Activated CD4-positive, alpha-beta memory T cell treated with anti-CD3 and anti-CD28 coated beads for 36 hours (primary cell): ENCODE measurements at regions of chr6 and their contacts with region 1.

Region 1: DNA sequence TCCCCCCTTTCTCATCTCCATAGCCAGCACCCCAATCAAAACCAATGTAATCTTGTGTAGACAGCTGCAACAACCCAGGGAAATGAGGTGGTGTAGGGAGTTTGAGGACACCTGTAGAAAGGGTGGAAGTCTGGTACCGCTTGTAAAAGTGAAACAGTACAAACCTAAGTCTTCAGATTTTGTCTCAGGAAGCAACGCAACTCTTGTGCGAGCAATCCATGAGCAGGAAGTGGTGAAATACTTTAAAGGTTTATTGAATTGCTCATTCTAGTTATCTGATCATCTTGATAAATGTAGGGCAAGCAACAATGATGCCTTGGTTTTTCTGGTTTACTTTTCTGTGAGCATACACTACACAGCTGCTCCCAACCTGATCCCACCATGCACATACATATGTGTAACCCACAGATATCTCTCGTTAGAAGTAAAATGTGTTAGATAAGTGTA is 71.1 kb upstream of the THEMIS start:
- DNase-seq: peak; percentile 59
- H3K4me3 Mint-ChIP-seq: peak overlapping the region; percentile 73
- H3K27ac Mint-ChIP-seq: peak overlapping the region; percentile 88
- H3K4me1 Mint-ChIP-seq: peaks cover 48% of the 10 kb centered on the region
- H3K27me3 Mint-ChIP-seq: no peaks in the 10 kb centered on the region

Region 2: DNA sequence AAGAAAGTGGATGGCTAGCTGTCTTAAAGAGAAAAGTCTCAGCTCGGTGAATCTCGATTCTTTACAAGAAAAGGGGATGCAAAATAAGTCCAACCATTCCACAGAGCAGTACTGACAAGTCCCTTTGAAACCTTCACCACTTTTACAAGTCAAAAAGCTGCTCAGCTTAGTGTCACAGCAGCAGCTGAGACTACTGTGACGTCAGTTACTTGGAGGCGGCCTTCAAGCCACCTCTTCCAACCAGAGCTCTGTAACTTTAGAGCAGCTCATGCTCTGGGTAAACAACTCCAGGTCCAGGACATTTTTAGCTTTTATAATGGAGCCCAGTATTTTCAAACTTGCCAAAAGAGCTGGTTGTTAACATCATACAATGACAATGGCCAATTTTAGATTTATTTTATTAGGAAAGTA is 512.7 kb before region 1 on chr6 and contains the start of gene KIAA0408:
- CTCF ChIA-PET with region 1: no interaction called
- POLR2A ChIA-PET with region 1: no interaction called
- intact Hi-C with region 1: no loop called
- DNase-seq: no peak
- H3K4me3 Mint-ChIP-seq: no peak within 1 kb of the TSS
- H3K27ac Mint-ChIP-seq: no peak within 1 kb of the TSS
- H3K4me1 Mint-ChIP-seq: peaks cover 2% of the 10 kb centered on the region
- H3K27me3 Mint-ChIP-seq: no peaks in the 10 kb centered on the region
- total RNA-seq, gene KIAA0408: 6.0 to 6.5 TPM

Region 3: GRCh38 chr6:127737009-127737486 is 234.9 kb before region 1 on chr6:
- CTCF ChIA-PET with region 1: interaction called, 5 read pairs
- POLR2A ChIA-PET with region 1: no interaction called
- intact Hi-C with region 1: loop called (anchors 2 kb)
- DNase-seq: peak; percentile 30
- H3K4me3 Mint-ChIP-seq: no peak overlapping the region
- H3K27ac Mint-ChIP-seq: peak overlapping the region; percentile 25
- H3K4me1 Mint-ChIP-seq: peaks cover 44% of the 10 kb centered on the region
- H3K27me3 Mint-ChIP-seq: no peaks in the 10 kb centered on the region

Region 4: GRCh38 chr6:127879685-127880084 is 92.3 kb before region 1 on chr6:
- CTCF ChIA-PET with region 1: no interaction called
- POLR2A ChIA-PET with region 1: interaction called, 3 read pairs
- intact Hi-C with region 1: loop called (anchors 1 kb)
- DNase-seq: peak; percentile 30
- H3K4me3 Mint-ChIP-seq: peak overlapping the region; percentile 52
- H3K27ac Mint-ChIP-seq: no peak overlapping the region
- H3K4me1 Mint-ChIP-seq: peaks cover 68% of the 10 kb centered on the region
- H3K27me3 Mint-ChIP-seq: no peaks in the 10 kb centered on the region

Region 5: DNA sequence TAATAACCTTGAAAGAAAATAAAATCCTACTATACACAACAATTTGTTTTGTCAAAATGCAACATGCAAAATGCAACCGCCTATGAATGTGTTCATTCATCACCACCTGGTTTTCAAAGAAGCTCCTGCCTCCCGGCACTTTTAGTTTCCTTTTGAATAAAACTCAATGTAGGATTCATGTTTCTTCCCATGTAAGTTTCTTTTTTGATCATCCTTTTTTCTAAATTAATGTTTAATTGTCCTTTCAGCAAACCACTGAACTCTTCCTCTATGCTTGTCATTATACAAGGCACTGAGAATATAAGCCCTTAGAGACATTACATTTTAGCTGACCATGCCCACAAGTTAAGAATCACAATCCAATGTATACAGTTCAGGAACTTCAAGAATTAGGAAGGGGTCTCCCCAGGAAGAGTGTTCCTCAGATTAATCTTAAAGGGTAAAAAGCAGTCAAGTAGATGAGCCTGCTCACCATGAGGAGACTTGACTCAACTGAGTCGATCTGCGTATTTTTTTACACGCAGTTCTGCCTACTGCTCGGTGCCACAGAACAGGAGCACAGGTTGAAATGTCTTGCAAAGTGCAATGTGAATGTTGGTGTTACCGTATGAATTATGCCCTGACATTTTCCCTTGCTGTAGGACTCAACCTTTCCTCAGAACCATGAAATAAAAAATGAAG is 63.9 kb before region 1 on chr6:
- CTCF ChIA-PET with region 1: interaction called, 5 read pairs
- POLR2A ChIA-PET with region 1: no interaction called
- intact Hi-C with region 1: loop called (anchors 1 kb)
- DNase-seq: peak; percentile 56
- H3K4me3 Mint-ChIP-seq: peak overlapping the region; percentile 70
- H3K27ac Mint-ChIP-seq: peak overlapping the region; percentile 86
- H3K4me1 Mint-ChIP-seq: peaks cover 67% of the 10 kb centered on the region
- H3K27me3 Mint-ChIP-seq: no peaks in the 10 kb centered on the region

Region 6: DNA sequence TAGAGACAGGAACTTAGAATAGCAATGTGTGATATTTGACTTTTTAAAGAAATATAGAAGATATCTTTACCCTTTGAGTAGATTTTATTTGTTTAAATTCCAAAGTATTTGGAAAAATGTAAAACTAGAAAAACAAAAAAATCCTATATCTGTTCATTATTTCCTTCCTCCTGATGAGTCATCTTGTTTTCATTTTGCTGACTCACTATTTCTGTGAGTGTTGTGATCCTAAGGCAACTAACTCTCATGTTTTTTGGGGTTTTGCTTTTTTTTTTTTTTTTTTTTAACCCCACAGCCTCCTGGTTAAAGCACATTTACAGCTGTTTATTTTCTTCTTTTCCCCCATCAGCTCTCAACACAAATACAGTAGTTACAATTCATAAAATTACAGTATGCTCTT is 33.3 kb before region 1 on chr6:
- CTCF ChIA-PET with region 1: no interaction called
- POLR2A ChIA-PET with region 1: interaction called, 3 read pairs
- intact Hi-C with region 1: loop called (anchors 1 kb)
- DNase-seq: no peak
- H3K4me3 Mint-ChIP-seq: no peak overlapping the region
- H3K27ac Mint-ChIP-seq: peak overlapping the region; percentile 62
- H3K4me1 Mint-ChIP-seq: peaks cover 41% of the 10 kb centered on the region
- H3K27me3 Mint-ChIP-seq: no peaks in the 10 kb centered on the region

Region 7: DNA sequence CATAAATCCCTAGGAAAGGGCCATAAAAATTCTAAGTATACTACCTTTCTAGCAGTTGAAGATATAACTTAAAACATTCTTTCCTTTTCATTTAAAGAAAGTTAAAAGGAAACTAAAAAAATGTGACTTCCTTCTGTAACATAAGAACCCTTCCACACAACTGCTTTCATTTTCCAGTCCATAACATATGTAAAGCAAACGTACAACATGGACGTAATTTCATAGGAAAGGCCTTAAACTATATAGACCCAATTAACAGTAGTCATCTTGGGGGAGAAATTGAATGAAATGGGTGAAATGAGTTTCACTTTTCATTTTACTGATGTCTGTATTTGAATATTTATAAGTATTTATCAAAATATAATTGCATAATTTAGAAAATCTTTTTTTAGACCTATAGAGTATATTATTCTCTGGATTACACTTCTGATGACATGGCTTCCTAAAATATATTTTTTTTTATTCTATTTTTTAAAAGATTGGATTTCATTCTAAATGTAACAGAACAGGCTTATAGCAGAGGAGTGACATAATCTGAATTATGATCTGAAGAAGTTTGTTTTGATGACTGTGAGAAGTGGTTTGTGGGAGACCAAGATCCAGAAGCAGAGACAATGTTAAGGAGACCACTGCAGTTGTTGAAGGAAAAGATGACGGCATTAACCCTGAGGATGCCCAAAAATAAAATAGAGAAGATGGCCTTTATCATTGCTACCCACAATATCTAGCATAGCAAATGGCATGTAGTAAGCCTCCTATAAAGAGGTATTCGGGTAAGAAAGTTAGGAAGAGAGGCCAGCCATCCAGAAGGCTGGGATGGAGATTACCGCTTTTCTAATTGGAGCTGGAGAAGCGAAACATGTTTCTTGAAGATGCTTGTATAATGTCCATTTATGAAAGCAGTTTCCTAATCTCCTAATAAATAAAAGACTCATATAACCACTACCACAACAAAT is 288.0 kb after region 1 on chr6:
- CTCF ChIA-PET with region 1: interaction called, 5 read pairs
- POLR2A ChIA-PET with region 1: no interaction called
- intact Hi-C with region 1: loop called (anchors 5 kb)
- DNase-seq: no peak
- H3K4me3 Mint-ChIP-seq: peak overlapping the region; percentile 14
- H3K27ac Mint-ChIP-seq: no peak overlapping the region
- H3K4me1 Mint-ChIP-seq: peaks cover 22% of the 10 kb centered on the region
- H3K27me3 Mint-ChIP-seq: no peaks in the 10 kb centered on the region

Region 8: GRCh38 chr6:128655978-128656498 is 684.1 kb after region 1 on chr6:
- CTCF ChIA-PET with region 1: no interaction called
- POLR2A ChIA-PET with region 1: no interaction called
- intact Hi-C with region 1: loop called (anchors 5 kb)
- DNase-seq: peak; percentile 16
- H3K4me3 Mint-ChIP-seq: no peak overlapping the region
- H3K27ac Mint-ChIP-seq: peak overlapping the region; percentile 74
- H3K4me1 Mint-ChIP-seq: peaks cover 31% of the 10 kb centered on the region
- H3K27me3 Mint-ChIP-seq: peaks cover 10% of the 10 kb centered on the region